Cardiac septum (tissue), 1 donor: ENCODE measurements at regions of chrX and their contacts with region 1.

Region 1: DNA sequence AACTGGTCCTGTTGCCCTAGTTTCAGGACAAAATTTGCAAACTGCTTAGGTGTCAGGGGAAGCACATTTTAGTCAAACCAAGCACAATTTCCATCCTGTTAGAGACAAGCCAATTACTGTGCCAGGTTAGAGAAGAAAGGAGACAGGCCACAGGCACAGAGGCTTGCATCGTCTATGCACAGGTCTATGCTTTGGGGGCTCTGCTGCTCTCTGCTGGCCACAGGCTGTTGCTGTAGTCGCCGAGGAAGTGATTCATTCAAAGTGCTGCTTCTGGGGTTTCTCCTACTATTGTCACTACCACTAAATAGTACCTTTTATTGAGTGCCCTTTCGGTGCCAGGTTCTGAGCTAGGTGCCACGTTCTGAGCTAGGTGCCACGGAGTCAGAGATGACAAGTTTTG is 45.5 kb downstream of the VGLL1 start:
- DNase-seq: no peak

Region 2: DNA sequence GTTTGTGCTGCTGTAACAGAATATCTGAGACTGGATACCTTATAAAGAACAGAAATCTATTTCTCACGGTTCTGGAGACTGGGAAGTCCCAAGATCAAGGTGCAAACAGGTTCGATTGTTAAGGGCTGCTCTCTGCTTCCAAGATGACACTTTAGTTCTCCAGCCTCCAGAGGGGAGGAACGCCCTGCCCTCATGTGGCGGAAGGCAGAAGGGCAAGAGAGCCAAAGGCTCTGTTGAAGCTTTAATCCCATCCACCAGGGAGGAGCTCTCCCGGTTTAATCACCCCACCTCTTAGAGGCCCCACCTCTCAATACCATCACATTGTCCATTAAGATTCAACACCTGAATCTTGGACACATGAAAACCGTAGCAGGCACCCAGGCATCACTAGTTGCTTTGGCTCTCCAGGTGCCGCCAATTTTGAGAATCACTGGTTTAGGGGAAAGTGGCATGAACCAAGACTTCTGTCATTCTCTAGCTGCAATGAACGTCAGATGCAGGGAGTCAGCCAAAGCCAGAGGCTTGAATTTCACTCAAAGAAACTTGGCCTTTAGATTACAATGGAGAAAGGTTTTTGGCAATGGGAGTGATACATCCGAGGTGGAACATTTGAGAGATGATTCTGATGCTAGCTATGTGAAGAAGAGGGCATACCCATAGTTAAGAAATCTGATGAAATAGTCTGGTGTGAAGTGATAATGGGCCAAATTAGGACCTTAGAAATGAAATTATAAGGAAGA is 414.6 kb before region 1 on chrX:
- intact Hi-C with region 1: loop called (anchors 5 kb)
- DNase-seq: no peak

Region 3: DNA sequence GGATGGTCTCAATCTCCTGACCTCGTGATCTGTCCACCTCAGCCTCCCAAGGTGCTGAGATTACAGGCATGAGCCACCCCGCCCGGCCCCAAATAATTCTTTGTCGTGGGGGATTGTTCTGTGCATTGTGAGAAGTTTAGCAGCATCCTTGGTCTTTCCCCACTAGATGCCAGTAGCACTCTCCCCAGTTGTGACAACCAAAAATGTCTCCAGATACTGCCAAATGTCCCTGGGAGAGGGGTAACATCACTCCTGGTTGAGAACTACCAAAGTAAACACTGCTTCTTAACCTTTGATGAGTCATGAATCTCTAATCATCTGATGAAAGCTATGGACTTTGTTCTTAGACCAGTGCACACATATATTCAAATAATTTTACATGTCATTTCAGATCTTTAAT is 180.6 kb before region 1 on chrX:
- intact Hi-C with region 1: loop called (anchors 10 kb)
- DNase-seq: no peak

Region 4: GRCh38 chrX:136488706-136489105 is 88.8 kb before region 1 on chrX:
- intact Hi-C with region 1: no loop called
- DNase-seq: no peak